CD8-positive, alpha-beta T cell (primary cell): ENCODE measurements at regions of chr2 and their contacts with region 1.

Region 1: DNA sequence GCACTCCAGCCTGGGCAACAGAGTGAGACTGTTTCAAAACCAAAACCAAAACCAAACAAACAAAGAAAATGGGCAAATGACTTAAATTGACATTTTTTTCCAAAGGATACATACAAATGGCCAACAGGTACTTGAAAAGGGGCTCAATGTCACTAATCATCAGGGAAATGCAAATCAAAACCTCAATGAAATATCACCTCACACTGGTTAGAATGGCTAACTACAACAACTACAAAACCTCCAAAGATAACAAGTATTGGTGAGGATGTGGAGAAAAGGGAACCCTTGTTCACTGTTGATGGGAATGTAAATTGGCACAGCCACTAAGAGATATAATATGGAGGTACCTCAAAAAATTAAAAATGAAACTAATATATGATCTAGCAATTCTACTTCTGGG is 213.2 kb upstream of the HS6ST1 start:
- DNase-seq: peak in 1 of 9 experiments; percentile 15
- ATAC-seq: no peak
- H3K4me3 ChIP-seq: no peak overlapping the region
- H3K4me3 Mint-ChIP-seq: no peak overlapping the region
- H3K27ac ChIP-seq: no peak overlapping the region
- H3K27ac Mint-ChIP-seq: no peak overlapping the region
- H3K4me1 ChIP-seq: no peaks in the 10 kb centered on the region
- H3K4me1 Mint-ChIP-seq: no peaks in the 10 kb centered on the region
- H3K27me3 ChIP-seq: no peaks in the 10 kb centered on the region
- H3K27me3 Mint-ChIP-seq: no peaks in the 10 kb centered on the region
- CTCF ChIP-seq: no peak

Region 2: GRCh38 chr2:128321784-128322714 is 209.8 kb before region 1 on chr2:
- CTCF ChIA-PET with region 1: no interaction called
- POLR2A ChIA-PET with region 1: no interaction called
- intact Hi-C with region 1: loop called in 1 of 2 experiments (anchors 5 kb)
- DNase-seq: peak; percentile 66 to 89 (median 80)
- ATAC-seq: peak; percentile 68
- H3K4me3 ChIP-seq: peak overlapping the region; percentile 48 to 76
- H3K4me3 Mint-ChIP-seq: peak overlapping the region; percentile 74
- H3K27ac ChIP-seq: peak overlapping the region in 1 of 2 experiments; percentile 35
- H3K27ac Mint-ChIP-seq: no peak overlapping the region
- H3K4me1 ChIP-seq: peaks cover 15% of the 10 kb centered on the region
- H3K4me1 Mint-ChIP-seq: peaks cover 14% of the 10 kb centered on the region
- H3K27me3 ChIP-seq: peaks cover 0 to 3% of the 10 kb centered on the region in 2 experiments
- H3K27me3 Mint-ChIP-seq: no peaks in the 10 kb centered on the region
- CTCF ChIP-seq: peak; percentile 94